ENCODE measurements at regions of chr4 and their contacts with region 1.

Region 1: GRCh38 chr4:101730291-101731117 is 60.0 kb upstream of the BANK1 start:
- DNase-seq: peak; percentile 64 to 80 (median 78)
- H3K4me3 ChIP-seq: no peak overlapping the region
- H3K27ac ChIP-seq: no peak overlapping the region
- H3K4me1 ChIP-seq: no peaks in the 10 kb centered on the region
- H3K27me3 ChIP-seq: no peaks in the 10 kb centered on the region

Region 2: GRCh38 chr4:101169044-101170014 is 561.2 kb before region 1 on chr4:
- CTCF ChIA-PET with region 1: interaction called, 33 read pairs
- POLR2A ChIA-PET with region 1: no interaction called
- DNase-seq: peak; percentile 67 to 86 (median 82)
- H3K4me3 ChIP-seq: no peak overlapping the region
- H3K27ac ChIP-seq: no peak overlapping the region
- H3K4me1 ChIP-seq: peaks cover 0 to 3% (median 1%) of the 10 kb centered on the region in 4 experiments
- H3K27me3 ChIP-seq: no peaks in the 10 kb centered on the region

Region 3: DNA sequence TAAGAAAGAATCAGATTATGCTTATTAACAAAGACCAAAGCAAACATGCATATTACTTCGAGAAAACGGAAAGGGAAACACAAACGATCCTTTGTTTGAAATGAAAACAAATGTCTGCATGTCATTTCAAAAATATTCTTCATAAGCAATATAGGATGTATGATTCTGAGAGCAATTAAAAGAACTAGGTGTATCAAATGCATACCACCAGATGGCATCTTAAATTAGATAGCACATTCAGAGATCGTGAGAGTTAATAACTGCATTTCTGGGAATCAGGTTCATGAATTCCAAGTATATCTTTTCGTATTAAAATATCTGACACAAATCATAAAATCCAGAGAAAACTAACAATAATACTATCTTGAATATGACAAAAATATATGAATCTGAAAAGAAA is 542.7 kb before region 1 on chr4:
- CTCF ChIA-PET with region 1: interaction called, 11 read pairs
- POLR2A ChIA-PET with region 1: no interaction called
- DNase-seq: peak; percentile 25 to 40 (median 40)
- H3K4me3 ChIP-seq: no peak overlapping the region
- H3K27ac ChIP-seq: no peak overlapping the region
- H3K4me1 ChIP-seq: peaks cover 0 to 6% (median 3%) of the 10 kb centered on the region in 4 experiments
- H3K27me3 ChIP-seq: no peaks in the 10 kb centered on the region